Calu3 (cell line): ENCODE measurements at regions of chr1 and their contacts with region 1.

Region 1: GRCh38 chr1:158203693-158204457 is 23.2 kb downstream of the CD1D start:
- DNase-seq: peak; percentile 41
- H3K4me3 Mint-ChIP-seq: no peak overlapping the region
- H3K27ac Mint-ChIP-seq: no peak overlapping the region
- H3K4me1 Mint-ChIP-seq: peaks cover 22% of the 10 kb centered on the region
- H3K27me3 Mint-ChIP-seq: peaks cover 17% of the 10 kb centered on the region
- CTCF ChIP-seq: peak; percentile 64

Region 2: DNA sequence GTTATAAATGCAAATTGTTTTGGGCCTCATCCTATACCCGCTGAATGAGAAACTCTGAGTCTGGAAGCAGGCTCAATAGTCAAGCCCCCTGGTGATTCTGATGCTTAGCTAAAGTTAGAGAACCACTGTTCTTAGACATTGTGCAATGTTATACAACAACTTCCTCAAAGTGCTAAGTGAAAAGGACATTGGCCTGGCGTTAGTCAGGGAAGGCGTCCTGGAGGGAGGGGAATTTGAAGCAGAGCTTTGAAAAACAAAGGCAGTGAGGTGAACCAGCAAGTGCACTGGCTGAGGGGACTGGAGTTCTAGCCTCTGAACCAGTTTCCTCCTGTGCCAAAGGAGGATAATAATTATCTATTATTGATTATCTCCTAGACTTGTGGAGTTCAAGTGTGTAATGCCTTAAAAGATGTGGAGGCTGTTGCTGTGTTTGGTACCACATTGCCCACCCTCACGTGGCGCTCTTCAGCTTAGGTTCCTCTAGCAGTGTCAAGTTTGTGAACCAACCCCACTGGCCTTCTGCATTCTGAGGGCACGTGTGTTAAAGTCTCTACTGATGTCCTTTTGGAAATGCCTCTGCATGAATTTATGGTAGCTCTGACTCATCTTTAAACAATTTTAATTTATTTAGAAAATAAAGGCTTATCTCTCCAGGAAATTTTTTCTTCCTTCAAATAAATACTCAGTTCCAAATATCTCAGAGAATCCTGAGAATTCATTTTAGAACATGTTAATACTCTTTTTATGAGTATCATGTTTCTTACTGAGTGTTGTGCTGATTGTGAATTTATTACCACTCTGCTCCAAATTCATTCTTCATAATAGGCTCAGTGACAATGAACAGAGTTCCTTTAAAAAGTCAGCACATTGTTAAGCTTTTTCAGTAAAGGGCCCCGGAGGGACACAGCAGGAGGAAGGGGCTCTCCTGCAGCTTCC is 17.8 kb before region 1 on chr1:
- CTCF ChIA-PET with region 1: interaction called, 3 read pairs
- intact Hi-C with region 1: loop called (anchors 2 kb)
- DNase-seq: peak; percentile 73
- H3K4me3 Mint-ChIP-seq: no peak overlapping the region
- H3K27ac Mint-ChIP-seq: peak overlapping the region; percentile 11
- H3K4me1 Mint-ChIP-seq: peaks cover 26% of the 10 kb centered on the region
- H3K27me3 Mint-ChIP-seq: peaks cover 14% of the 10 kb centered on the region
- CTCF ChIP-seq: no peak

Region 3: GRCh38 chr1:158329733-158330132 is 125.9 kb after region 1 on chr1:
- CTCF ChIA-PET with region 1: interaction called, 21 read pairs
- intact Hi-C with region 1: loop called (anchors 5 kb)
- DNase-seq: peak; percentile 29
- H3K4me3 Mint-ChIP-seq: no peak overlapping the region
- H3K27ac Mint-ChIP-seq: no peak overlapping the region
- H3K4me1 Mint-ChIP-seq: no peaks in the 10 kb centered on the region
- H3K27me3 Mint-ChIP-seq: no peaks in the 10 kb centered on the region
- CTCF ChIP-seq: no peak

Region 4: GRCh38 chr1:158527190-158527815 is 323.4 kb after region 1 on chr1:
- CTCF ChIA-PET with region 1: interaction called, 5 read pairs
- intact Hi-C with region 1: loop called (anchors 1 kb)
- DNase-seq: no peak
- H3K4me3 Mint-ChIP-seq: no peak overlapping the region
- H3K27ac Mint-ChIP-seq: no peak overlapping the region
- H3K4me1 Mint-ChIP-seq: no peaks in the 10 kb centered on the region
- H3K27me3 Mint-ChIP-seq: peaks cover 69% of the 10 kb centered on the region
- CTCF ChIP-seq: peak; percentile 70

Region 5: GRCh38 chr1:159071970-159072582 is 868.2 kb after region 1 on chr1:
- CTCF ChIA-PET with region 1: interaction called, 4 read pairs
- intact Hi-C with region 1: loop called (anchors 5 kb)
- DNase-seq: peak; percentile 12
- H3K4me3 Mint-ChIP-seq: no peak overlapping the region
- H3K27ac Mint-ChIP-seq: no peak overlapping the region
- H3K4me1 Mint-ChIP-seq: no peaks in the 10 kb centered on the region
- H3K27me3 Mint-ChIP-seq: peaks cover 7% of the 10 kb centered on the region
- CTCF ChIP-seq: peak; percentile 72